Breast epithelium (tissue), 4 donors: ENCODE measurements at regions of chr4 and their contacts with region 1.

Region 1: DNA sequence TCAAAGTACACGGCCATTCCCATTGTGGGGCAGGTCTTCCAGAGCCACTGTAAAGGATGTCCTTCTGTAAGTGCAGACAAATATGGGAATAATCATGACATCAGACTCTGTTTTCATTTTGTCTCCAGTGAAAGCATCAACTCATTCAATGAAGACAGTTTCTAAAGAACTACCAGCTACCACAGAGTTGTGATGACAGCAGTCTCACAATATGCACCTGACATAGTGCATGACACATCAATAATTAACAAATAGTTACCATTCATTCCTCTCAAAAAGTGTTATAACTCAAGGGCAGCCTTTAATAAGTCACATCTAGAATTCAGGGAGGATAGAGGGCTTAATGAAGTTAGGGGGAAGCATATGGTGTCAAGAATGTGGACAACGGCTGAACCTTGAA is 20.2 kb downstream of the MTTP start:
- DNase-seq: no peak
- H3K4me3 ChIP-seq: no peak overlapping the region
- H3K27ac ChIP-seq: no peak overlapping the region
- H3K4me1 ChIP-seq: no peaks in the 10 kb centered on the region
- H3K27me3 ChIP-seq: no peaks in the 10 kb centered on the region
- CTCF ChIP-seq: no peak
- POLR2A ChIP-seq: no peak

Region 2: GRCh38 chr4:98092833-98093439 is 1501.9 kb before region 1 on chr4:
- intact Hi-C with region 1: loop called (anchors 5 kb)
- DNase-seq: no peak
- H3K4me3 ChIP-seq: no peak overlapping the region
- H3K27ac ChIP-seq: no peak overlapping the region
- H3K4me1 ChIP-seq: no peaks in the 10 kb centered on the region
- H3K27me3 ChIP-seq: no peaks in the 10 kb centered on the region
- CTCF ChIP-seq: peak in 1 of 3 donors; percentile 9
- POLR2A ChIP-seq: no peak